ENCODE measurements at regions of chr14 and their contacts with region 1.

Region 1: DNA sequence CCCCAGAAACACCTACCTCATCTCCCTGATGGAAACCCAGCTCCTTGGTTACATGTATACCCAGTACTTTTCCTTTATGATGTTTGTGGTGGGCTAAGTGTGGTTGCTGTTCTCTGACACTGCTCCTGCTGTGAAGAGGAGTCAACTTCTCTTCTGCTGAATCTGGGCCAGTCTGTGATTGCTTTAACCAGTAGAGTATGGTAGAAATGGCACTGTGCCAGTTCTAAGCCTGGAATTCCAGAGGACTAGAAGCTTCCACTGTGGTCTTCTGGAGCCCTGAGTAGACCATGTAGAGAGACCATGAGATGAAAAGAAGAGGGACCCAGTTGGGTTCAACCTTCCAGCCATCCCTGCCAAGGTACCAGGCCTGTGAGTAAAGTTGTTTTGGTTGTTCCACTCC is 220.2 kb downstream of the VRK1 start:
- DNase-seq: no peak
- H3K4me3 ChIP-seq: no peak overlapping the region
- H3K27ac ChIP-seq: no peak overlapping the region
- H3K4me1 ChIP-seq: no peaks in the 10 kb centered on the region
- H3K27me3 ChIP-seq: no peaks in the 10 kb centered on the region
- CTCF ChIP-seq: no peak

Region 2: GRCh38 chr14:97080991-97081390 is 63.6 kb after region 1 on chr14:
- CTCF ChIA-PET with region 1: no interaction called
- dilution Hi-C with region 1: loop called (anchors 5 kb)
- in situ Hi-C with region 1: no loop called
- intact Hi-C with region 1: no loop called
- DNase-seq: no peak
- H3K4me3 ChIP-seq: no peak overlapping the region
- H3K27ac ChIP-seq: no peak overlapping the region
- H3K4me1 ChIP-seq: no peaks in the 10 kb centered on the region
- H3K27me3 ChIP-seq: no peaks in the 10 kb centered on the region
- CTCF ChIP-seq: no peak